Psoas muscle (tissue), 8 donors: ENCODE measurements at regions of chr11 and their contacts with region 1.

Region 1: GRCh38 chr11:126716456-126717083 is 284.0 kb downstream of the KIRREL3 start:
- DNase-seq: no peak
- ATAC-seq: no peak
- H3K4me3 ChIP-seq: no peak overlapping the region
- H3K27ac ChIP-seq: no peak overlapping the region
- H3K4me1 ChIP-seq: no peaks in the 10 kb centered on the region
- H3K27me3 ChIP-seq: peaks cover 0 to 3% (median 0%) of the 10 kb centered on the region in 3 donors
- CTCF ChIP-seq: peak; percentile 31

Region 2: GRCh38 chr11:126989942-126990715 is 273.6 kb after region 1 on chr11:
- intact Hi-C with region 1: loop called in 1 of 2 experiments (anchors 5 kb)
- DNase-seq: peak; percentile 60 to 74
- ATAC-seq: peak; percentile 74 to 81 (median 76)
- H3K4me3 ChIP-seq: no peak overlapping the region
- H3K27ac ChIP-seq: no peak overlapping the region
- H3K4me1 ChIP-seq: no peaks in the 10 kb centered on the region
- H3K27me3 ChIP-seq: peaks cover 0 to 8% (median 2%) of the 10 kb centered on the region in 3 donors
- CTCF ChIP-seq: peak; percentile 78

Region 3: DNA sequence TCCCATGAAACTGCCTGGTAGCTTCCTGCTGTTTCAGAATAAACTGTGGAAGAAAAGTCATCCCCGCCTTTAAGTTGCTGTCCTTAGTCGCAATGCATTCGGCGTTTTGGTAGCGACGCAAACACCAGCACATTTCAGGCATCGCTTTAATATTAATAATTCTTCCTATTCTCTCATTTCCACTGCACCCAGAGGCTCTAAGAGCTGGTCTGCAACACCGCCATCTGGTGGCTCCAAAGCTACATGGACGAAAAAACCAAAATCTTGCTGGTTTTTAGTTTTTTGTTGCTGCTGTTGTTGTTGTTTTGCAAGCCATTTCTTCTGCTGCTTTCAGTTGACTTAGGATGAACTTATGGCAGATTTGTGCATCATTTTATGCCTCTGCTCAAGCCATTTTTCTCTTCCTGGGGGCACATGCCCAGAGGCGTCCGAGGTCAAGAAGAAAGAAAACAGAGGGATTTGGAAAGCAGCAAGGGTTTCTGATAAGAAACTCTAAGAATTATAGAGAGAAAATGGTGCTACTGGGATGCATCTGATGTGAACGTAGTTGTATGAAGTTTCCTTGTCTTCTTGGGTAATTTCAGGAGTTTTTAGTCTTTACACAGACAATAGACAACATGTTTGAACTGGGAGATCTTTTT is 629.4 kb after region 1 on chr11:
- intact Hi-C with region 1: loop called in 1 of 2 experiments (anchors 5 kb)
- DNase-seq: no peak
- ATAC-seq: no peak
- H3K4me3 ChIP-seq: no peak overlapping the region
- H3K27ac ChIP-seq: no peak overlapping the region
- H3K4me1 ChIP-seq: no peaks in the 10 kb centered on the region
- H3K27me3 ChIP-seq: peaks cover 0 to 3% (median 3%) of the 10 kb centered on the region in 3 donors
- CTCF ChIP-seq: peak; percentile 56